ENCODE measurements at regions of chr11 and their contacts with region 1.

Region 1: DNA sequence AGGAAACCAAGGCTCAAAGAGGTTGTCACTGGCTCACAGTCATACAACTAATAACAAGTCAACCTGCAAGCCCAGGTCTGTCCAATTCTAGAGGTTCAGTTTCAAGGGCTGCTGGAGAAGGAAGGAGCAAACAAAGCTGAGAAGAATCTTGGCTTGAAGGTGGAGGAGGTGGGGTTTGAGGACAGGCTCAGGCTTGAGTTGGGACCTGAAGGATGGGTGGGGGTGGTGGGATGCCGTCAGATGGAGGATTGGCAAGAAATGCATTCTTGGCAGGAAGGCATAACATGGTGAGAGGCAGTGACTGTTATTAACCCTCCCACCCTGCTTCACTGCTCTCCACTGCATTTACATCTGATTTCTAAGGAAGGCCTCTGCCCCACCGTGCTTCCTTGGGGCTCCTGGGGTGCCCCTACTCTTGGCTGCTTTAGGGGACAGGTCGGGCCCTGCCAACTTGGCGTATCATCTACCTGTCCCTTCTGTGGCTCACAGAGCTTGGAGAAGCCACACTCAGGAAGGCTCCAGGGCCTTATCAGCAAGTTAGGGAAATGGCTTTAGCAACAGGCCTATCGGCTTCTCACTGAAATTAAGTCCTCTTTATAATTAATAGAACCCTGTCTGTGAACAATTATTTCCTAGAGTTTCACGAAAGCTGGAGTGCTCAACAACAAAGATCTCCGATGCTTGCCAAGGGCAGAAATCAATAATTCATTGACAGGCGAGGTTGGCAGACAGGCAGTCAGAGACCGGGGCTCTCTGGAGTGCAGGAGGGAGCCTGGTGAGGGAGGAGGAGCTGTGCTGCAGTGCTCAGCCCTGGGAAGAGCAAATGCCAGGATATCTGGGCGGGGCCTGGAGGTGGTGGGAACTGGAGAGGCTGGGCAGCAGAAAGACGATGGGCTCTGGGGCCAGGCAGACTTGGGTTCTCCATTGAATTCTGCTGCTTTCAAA is 84.9 kb upstream of the NARS2 start:
- DNase-seq: no peak
- ATAC-seq: no peak
- H3K4me3 ChIP-seq: no peak overlapping the region
- H3K27ac ChIP-seq: no peak overlapping the region
- H3K4me1 ChIP-seq: no peaks in the 10 kb centered on the region
- H3K27me3 ChIP-seq: no peaks in the 10 kb centered on the region
- CTCF ChIP-seq: no peak
- POLR2A ChIP-seq: no peak
- RAD21 ChIP-seq: no peak

Region 2: GRCh38 chr11:79092791-79093353 is 433.3 kb after region 1 on chr11:
- CTCF ChIA-PET with region 1: no interaction called
- POLR2A ChIA-PET with region 1: no interaction called
- dilution Hi-C with region 1: no loop called
- in situ Hi-C with region 1: loop called (anchors 10 kb)
- intact Hi-C with region 1: no loop called
- DNase-seq: peak; percentile 100
- ATAC-seq: peak; percentile 81
- H3K4me3 ChIP-seq: no peak overlapping the region
- H3K27ac ChIP-seq: peak overlapping the region; percentile 88
- H3K4me1 ChIP-seq: peaks cover 18% of the 10 kb centered on the region
- H3K27me3 ChIP-seq: no peaks in the 10 kb centered on the region
- CTCF ChIP-seq: no peak
- POLR2A ChIP-seq: no peak
- RAD21 ChIP-seq: no peak